Activated CD4-positive, alpha-beta T cell treated with anti-CD3 and anti-CD28 coated beads for 36 hours (primary cell): ENCODE measurements at regions of chr2 and their contacts with region 1.

Region 1: GRCh38 chr2:36251951-36252350 is 103.6 kb upstream of the CRIM1 start:
- DNase-seq: no peak
- ATAC-seq: no peak
- H3K4me3 Mint-ChIP-seq: no peak overlapping the region
- H3K27ac Mint-ChIP-seq: no peak overlapping the region
- H3K4me1 Mint-ChIP-seq: peaks cover 14% of the 10 kb centered on the region
- H3K27me3 Mint-ChIP-seq: peaks cover 17% of the 10 kb centered on the region

Region 2: DNA sequence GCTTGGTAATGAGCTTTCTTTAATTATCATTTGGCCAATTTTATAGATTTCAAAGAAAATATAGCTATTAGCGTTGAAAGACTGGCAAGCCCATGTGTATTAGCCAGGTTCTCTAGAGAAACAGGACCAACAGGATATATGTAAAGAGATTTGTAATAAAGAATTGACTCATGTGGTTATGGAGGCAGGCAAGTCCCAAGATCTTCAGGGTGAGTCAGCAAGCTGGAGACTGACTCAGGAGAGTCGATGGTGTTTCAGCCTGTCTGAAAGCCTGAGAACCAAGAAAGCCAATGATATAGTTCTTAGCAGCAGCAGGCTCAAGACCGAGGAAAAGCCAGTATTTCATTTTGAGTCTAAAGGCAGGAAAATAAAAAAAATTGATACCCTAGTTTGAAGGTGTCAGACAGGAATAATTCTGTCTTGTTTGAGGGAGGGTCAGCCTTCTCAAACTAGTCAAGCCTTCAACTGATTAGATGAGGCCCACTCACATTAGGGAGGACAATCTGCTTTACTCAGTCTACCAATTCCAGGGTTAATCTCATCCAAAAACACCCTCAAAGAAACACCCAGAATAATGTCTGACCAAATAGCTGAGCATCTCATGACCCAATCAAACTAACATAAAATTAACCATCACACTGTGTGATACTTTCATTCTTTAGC is 25.3 kb after region 1 on chr2:
- CTCF ChIA-PET with region 1: no interaction called
- POLR2A ChIA-PET with region 1: no interaction called
- intact Hi-C with region 1: loop called (anchors 1 to 2 kb)
- DNase-seq: peak; percentile 59
- ATAC-seq: peak; percentile 96
- H3K4me3 Mint-ChIP-seq: no peak overlapping the region
- H3K27ac Mint-ChIP-seq: peak overlapping the region; percentile 11
- H3K4me1 Mint-ChIP-seq: no peaks in the 10 kb centered on the region
- H3K27me3 Mint-ChIP-seq: no peaks in the 10 kb centered on the region

Region 3: DNA sequence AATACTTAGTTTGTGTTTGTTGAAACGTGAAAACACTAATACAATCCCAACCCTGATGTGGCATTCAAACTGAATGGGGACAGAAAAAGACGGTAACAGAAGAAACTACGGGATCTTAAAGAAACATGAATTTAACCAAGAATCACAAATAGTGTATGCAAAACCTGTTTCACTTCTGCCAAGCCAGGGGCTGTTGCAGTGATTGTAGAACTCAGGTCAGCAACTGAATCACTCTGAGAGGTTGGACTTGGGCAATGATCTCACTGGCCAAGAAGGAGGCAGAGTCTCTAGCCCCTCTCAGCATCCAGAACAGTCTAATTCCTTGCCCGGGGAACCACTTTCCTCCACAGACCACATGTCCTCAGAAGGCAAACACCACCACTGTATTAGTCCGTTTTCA is 48.7 kb after region 1 on chr2:
- CTCF ChIA-PET with region 1: no interaction called
- POLR2A ChIA-PET with region 1: no interaction called
- intact Hi-C with region 1: no loop called
- DNase-seq: no peak
- ATAC-seq: no peak
- H3K4me3 Mint-ChIP-seq: no peak overlapping the region
- H3K27ac Mint-ChIP-seq: no peak overlapping the region
- H3K4me1 Mint-ChIP-seq: no peaks in the 10 kb centered on the region
- H3K27me3 Mint-ChIP-seq: no peaks in the 10 kb centered on the region

Region 4: GRCh38 chr2:36389091-36389564 is 137.2 kb after region 1 on chr2:
- CTCF ChIA-PET with region 1: no interaction called
- POLR2A ChIA-PET with region 1: no interaction called
- intact Hi-C with region 1: no loop called
- DNase-seq: no peak
- ATAC-seq: no peak
- H3K4me3 Mint-ChIP-seq: no peak overlapping the region
- H3K27ac Mint-ChIP-seq: no peak overlapping the region
- H3K4me1 Mint-ChIP-seq: peaks cover 10% of the 10 kb centered on the region
- H3K27me3 Mint-ChIP-seq: peaks cover 3% of the 10 kb centered on the region

Region 5: DNA sequence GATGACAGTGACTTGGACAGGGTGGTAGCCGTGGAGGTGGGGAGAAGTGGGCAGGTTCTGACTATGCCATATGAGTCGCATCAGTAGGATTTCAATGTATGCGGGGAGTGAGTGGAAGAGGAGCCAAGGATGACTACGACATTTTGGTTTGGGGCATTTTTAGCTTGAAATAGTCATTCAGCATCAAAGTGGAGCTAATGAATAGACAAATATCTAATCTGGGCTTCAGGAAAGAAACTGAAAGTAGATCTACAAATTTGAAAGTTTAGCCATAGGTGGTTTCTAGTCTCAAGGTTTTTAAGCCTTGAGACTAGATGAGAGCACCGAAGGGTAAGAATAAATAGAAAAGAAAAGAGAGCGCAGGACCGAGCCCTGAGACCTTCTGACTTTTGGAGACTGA is 287.7 kb after region 1 on chr2:
- CTCF ChIA-PET with region 1: no interaction called
- POLR2A ChIA-PET with region 1: no interaction called
- intact Hi-C with region 1: no loop called
- DNase-seq: no peak
- ATAC-seq: no peak
- H3K4me3 Mint-ChIP-seq: no peak overlapping the region
- H3K27ac Mint-ChIP-seq: no peak overlapping the region
- H3K4me1 Mint-ChIP-seq: no peaks in the 10 kb centered on the region
- H3K27me3 Mint-ChIP-seq: no peaks in the 10 kb centered on the region